Psoas muscle (tissue), 8 donors: ENCODE measurements at regions of chr21 and their contacts with region 1.

Region 1: DNA sequence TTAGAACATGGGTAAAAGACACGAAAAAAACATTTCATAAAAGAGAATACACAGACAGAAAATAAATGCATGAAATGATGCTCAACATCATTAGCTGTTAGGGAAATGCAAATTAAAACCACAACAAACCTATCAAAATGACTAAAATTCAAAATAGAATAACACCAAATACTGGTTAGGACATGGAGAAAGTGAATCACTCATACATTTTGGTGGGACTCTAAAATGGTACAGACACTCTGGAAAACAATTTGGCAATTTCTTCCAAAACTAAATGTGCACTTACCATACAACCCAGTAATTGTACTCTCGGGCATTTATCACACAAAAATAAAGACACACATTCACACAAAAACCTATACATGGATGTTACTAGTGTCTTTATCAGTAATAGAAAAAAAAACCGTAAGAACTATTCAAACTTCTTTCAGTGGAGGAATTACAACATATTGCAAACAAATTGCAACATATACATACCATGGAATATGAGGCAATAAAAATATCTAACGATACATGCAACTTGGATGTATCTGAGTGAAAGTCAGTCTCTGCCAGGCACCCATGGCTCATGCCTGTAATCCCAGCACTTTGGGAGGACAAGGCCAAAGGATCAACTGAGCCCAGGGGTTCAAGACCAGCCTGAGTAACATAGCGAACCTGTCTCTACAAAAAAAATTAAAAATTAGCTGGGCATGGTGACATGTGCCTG is 19.7 kb downstream of the HSF2BP start:
- DNase-seq: no peak
- ATAC-seq: no peak
- H3K4me3 ChIP-seq: no peak overlapping the region
- H3K27ac ChIP-seq: no peak overlapping the region
- H3K4me1 ChIP-seq: no peaks in the 10 kb centered on the region
- H3K27me3 ChIP-seq: no peaks in the 10 kb centered on the region
- CTCF ChIP-seq: no peak

Region 2: GRCh38 chr21:41733949-41734645 is 1905.5 kb before region 1 on chr21:
- intact Hi-C with region 1: no loop called
- DNase-seq: peak in 1 of 2 donors; percentile 26
- ATAC-seq: no peak
- H3K4me3 ChIP-seq: no peak overlapping the region
- H3K27ac ChIP-seq: no peak overlapping the region
- H3K4me1 ChIP-seq: no peaks in the 10 kb centered on the region
- H3K27me3 ChIP-seq: peaks cover 0 to 9% (median 9%) of the 10 kb centered on the region in 3 donors
- CTCF ChIP-seq: no peak

Region 3: GRCh38 chr21:43597052-43597451 is 42.6 kb before region 1 on chr21:
- intact Hi-C with region 1: loop called in 1 of 2 experiments (anchors 5 kb)
- DNase-seq: no peak
- ATAC-seq: no peak
- H3K4me3 ChIP-seq: no peak overlapping the region
- H3K27ac ChIP-seq: no peak overlapping the region
- H3K4me1 ChIP-seq: no peaks in the 10 kb centered on the region
- H3K27me3 ChIP-seq: no peaks in the 10 kb centered on the region
- CTCF ChIP-seq: no peak